Activated CD8-positive, alpha-beta memory T cell treated with anti-CD3 and anti-CD28 coated beads, Interleukin-2, amount 10 ng/mL, durations not matched to agents 7 days and 5 days (primary cell): ENCODE measurements at regions of chr2 and their contacts with region 1.

Region 1: DNA sequence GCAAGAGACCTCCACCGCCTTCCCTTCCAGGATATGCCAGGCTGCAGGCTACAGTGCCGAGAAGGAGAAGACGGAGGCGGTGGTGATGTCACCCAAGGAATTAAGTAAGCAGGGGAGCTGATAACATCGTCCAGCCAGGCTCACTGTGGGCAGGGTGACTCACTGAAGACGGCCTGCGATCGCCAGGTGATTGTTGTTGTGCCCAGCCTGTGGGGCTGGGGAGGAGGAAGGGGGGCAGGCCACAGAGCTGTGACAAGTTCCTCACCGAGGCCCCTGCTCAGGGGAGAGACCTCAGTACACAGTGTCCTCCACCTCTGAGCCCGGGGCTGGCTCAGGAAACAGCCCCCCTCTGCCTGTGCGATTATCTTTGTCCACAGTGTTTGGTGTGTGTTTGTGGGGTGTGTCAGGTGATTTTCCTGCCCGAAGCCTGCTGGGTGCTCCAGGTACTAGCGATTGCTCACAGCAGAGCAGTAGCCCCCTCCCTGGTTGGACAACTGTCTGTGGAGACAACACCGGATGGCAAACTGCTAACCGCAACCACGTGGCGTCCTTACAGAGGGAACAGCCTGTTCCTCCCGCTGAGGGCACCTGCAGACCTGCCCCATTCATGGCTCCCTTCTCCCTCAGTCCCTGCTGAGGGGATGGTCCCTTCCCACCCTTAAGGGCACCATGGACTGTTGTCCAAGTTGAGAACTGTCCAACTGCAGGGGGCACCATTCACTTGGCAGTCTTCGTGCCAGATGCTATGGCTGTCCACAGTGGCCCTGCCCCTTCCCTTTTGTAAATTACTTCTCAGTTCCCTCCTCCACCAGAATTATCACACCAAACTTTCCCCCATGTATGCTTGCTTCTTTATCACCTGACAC is 95.1 kb downstream of the ZFP36L2 start:
- DNase-seq: peak; percentile 97
- ATAC-seq: peak; percentile 35
- H3K4me3 Mint-ChIP-seq: peak overlapping the region; percentile 52
- H3K27ac Mint-ChIP-seq: peak overlapping the region; percentile 99
- H3K4me1 Mint-ChIP-seq: peaks cover 89% of the 10 kb centered on the region
- H3K27me3 Mint-ChIP-seq: no peaks in the 10 kb centered on the region

Region 2: GRCh38 chr2:42865884-42866881 is 265.1 kb before region 1 on chr2:
- CTCF ChIA-PET with region 1: no interaction called
- DNase-seq: no peak
- ATAC-seq: no peak
- H3K4me3 Mint-ChIP-seq: no peak overlapping the region
- H3K27ac Mint-ChIP-seq: no peak overlapping the region
- H3K4me1 Mint-ChIP-seq: no peaks in the 10 kb centered on the region
- H3K27me3 Mint-ChIP-seq: no peaks in the 10 kb centered on the region

Region 3: GRCh38 chr2:43142921-43143438 is 11.7 kb after region 1 on chr2:
- CTCF ChIA-PET with region 1: interaction called, 34 read pairs
- DNase-seq: peak; percentile 75
- ATAC-seq: peak; percentile 70
- H3K4me3 Mint-ChIP-seq: peak overlapping the region; percentile 70
- H3K27ac Mint-ChIP-seq: peak overlapping the region; percentile 64
- H3K4me1 Mint-ChIP-seq: peaks cover 43% of the 10 kb centered on the region
- H3K27me3 Mint-ChIP-seq: no peaks in the 10 kb centered on the region

Region 4: DNA sequence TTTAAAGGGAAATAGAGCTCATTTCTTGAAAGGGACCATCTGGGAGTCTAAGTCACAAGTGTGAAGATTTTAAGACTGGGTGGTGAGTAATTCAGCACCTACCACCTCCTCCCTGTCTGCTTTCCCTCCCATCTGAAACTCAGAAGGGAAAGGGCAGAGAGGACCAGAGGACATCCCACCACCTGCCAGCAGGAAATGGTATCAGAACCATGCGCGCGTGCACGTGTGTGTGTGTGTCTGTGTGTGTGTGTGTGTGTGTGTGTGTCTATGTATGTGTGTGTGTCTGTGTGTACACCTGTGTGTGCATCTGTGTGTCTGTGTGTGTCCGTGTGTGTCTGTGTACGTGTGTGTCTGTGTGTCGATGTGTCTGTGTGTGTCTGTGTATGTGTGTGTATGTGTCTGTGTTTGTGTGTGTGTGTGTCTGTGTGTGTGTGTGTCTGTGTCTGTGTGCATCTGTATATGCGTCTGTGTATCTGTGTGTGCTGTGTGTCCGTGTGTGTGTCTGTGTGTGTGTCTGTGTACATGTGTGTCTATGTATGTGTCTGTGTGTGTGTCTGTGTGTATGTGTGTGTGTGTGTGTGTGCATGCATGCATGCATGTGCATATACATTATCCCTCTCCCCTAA is 18.3 kb after region 1 on chr2:
- CTCF ChIA-PET with region 1: interaction called, 34 read pairs
- DNase-seq: peak; percentile 79
- ATAC-seq: peak; percentile 90
- H3K4me3 Mint-ChIP-seq: peak overlapping the region; percentile 48
- H3K27ac Mint-ChIP-seq: peak overlapping the region; percentile 82
- H3K4me1 Mint-ChIP-seq: peaks cover 39% of the 10 kb centered on the region
- H3K27me3 Mint-ChIP-seq: no peaks in the 10 kb centered on the region

Region 5: GRCh38 chr2:43169987-43170386 is 38.7 kb after region 1 on chr2:
- CTCF ChIA-PET with region 1: interaction called, 20 read pairs
- DNase-seq: peak; percentile 83
- ATAC-seq: peak; percentile 28
- H3K4me3 Mint-ChIP-seq: no peak overlapping the region
- H3K27ac Mint-ChIP-seq: peak overlapping the region; percentile 86
- H3K4me1 Mint-ChIP-seq: peaks cover 64% of the 10 kb centered on the region
- H3K27me3 Mint-ChIP-seq: no peaks in the 10 kb centered on the region

Region 6: GRCh38 chr2:43194121-43194869 is 63.0 kb after region 1 on chr2:
- CTCF ChIA-PET with region 1: interaction called, 16 read pairs
- DNase-seq: no peak
- ATAC-seq: peak; percentile 12
- H3K4me3 Mint-ChIP-seq: peak overlapping the region; percentile 65
- H3K27ac Mint-ChIP-seq: peak overlapping the region; percentile 89
- H3K4me1 Mint-ChIP-seq: peaks cover 47% of the 10 kb centered on the region
- H3K27me3 Mint-ChIP-seq: no peaks in the 10 kb centered on the region

Region 7: GRCh38 chr2:43484323-43484930 is 353.2 kb after region 1 on chr2:
- CTCF ChIA-PET with region 1: interaction called, 66 read pairs
- DNase-seq: no peak
- ATAC-seq: peak; percentile 61
- H3K4me3 Mint-ChIP-seq: no peak overlapping the region
- H3K27ac Mint-ChIP-seq: no peak overlapping the region
- H3K4me1 Mint-ChIP-seq: peaks cover 40% of the 10 kb centered on the region
- H3K27me3 Mint-ChIP-seq: no peaks in the 10 kb centered on the region